ENCODE measurements at regions of chr20 and their contacts with region 1.

Region 1: GRCh38 chr20:3406481-3407039 is 909 bp downstream of the DNAAF9 start:
- DNase-seq: no peak
- H3K4me3 ChIP-seq: no peak overlapping the region
- H3K27ac ChIP-seq: no peak overlapping the region
- H3K4me1 ChIP-seq: no peaks in the 10 kb centered on the region
- CTCF ChIP-seq: no peak

Region 2: GRCh38 chr20:3436864-3437574 is 30.5 kb after region 1 on chr20:
- CTCF ChIA-PET with region 1: no interaction called
- POLR2A ChIA-PET with region 1: interaction called, 11 read pairs
- intact Hi-C with region 1: no loop called
- DNase-seq: no peak
- H3K4me3 ChIP-seq: no peak overlapping the region
- H3K27ac ChIP-seq: no peak overlapping the region
- H3K4me1 ChIP-seq: no peaks in the 10 kb centered on the region
- CTCF ChIP-seq: no peak

Measured in OCI-LY7 (cell line).